ENCODE measurements at regions of chr4 and their contacts with region 1.

Region 1: GRCh38 chr4:71553605-71554004 is 214.8 kb downstream of the SLC4A4 start:
- DNase-seq: peak; percentile 64
- ATAC-seq: peak; percentile 70
- H3K4me3 ChIP-seq: no peak overlapping the region
- H3K27ac ChIP-seq: no peak overlapping the region
- H3K4me1 ChIP-seq: peaks cover 23% of the 10 kb centered on the region
- H3K27me3 ChIP-seq: no peaks in the 10 kb centered on the region
- CTCF ChIP-seq: peak; percentile 84

Region 2: DNA sequence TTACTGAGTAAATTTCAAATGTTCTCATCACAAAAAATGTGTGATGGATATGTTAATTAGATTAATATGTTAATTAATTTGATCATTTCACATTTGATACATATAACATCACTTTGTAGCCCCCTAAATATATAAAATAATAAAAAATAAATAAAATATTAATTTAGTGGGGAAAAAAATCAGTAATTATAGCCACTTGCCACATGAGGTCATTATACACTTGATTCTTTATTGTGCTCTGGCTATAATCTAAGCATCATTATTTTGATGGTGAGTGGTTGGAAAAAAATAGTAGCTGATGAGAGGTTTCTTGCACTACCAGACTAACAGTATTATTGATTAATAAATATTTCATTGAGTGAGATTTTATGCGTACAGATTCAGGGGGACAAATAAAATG is 502.8 kb before region 1 on chr4:
- CTCF ChIA-PET with region 1: no interaction called
- POLR2A ChIA-PET with region 1: no interaction called
- intact Hi-C with region 1: loop called (anchors 5 kb)
- DNase-seq: peak; percentile 43
- ATAC-seq: peak; percentile 64; the same call in 1 of the 2 replicates
- H3K4me3 ChIP-seq: no peak overlapping the region
- H3K27ac ChIP-seq: no peak overlapping the region
- H3K4me1 ChIP-seq: no peaks in the 10 kb centered on the region
- H3K27me3 ChIP-seq: no peaks in the 10 kb centered on the region
- CTCF ChIP-seq: peak; percentile 29; the same call in 1 of the 2 replicates

Region 3: DNA sequence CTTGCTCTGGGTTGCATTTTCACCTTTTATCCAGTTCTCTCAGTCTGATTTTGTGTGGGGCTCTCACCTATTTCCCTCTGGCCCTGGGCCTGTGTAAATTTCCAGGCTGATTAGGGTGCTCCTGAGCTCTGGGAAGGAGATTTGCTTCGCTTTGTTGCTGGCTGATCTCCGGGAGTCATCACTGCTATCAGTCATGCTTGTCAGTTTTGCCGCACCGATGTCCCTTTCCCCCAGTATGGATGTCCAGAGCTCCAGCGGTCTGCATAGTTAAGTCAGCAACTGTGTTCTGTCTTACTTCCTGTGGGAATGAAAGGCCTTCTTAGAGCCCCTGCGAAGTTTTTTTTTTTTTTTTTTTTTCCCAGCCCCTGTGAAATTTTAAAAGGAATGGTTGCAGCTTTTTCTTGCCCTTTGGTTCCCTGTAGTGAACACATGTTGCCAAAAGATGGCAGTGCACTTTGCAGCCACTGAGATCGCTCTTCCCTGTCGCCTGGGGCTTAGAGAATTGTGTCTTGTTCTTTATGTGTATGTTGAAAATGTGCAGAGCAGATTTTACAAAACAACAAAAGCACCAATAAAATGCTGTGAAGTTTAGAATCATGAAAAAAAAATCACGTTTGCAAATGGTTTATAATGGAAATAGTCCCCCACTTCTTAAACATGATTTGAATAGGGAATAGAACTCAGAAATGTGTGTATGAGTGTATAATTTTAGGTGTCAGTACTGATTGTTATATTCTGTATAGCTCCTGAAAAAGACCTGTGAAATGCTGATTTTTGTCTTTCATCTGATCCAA is 323.9 kb before region 1 on chr4:
- CTCF ChIA-PET with region 1: interaction called, 5 read pairs
- POLR2A ChIA-PET with region 1: no interaction called
- intact Hi-C with region 1: loop called (anchors 1 kb)
- DNase-seq: peak; percentile 70
- ATAC-seq: peak; percentile 88
- H3K4me3 ChIP-seq: peak overlapping the region; percentile 53
- H3K27ac ChIP-seq: no peak overlapping the region
- H3K4me1 ChIP-seq: peaks cover 6% of the 10 kb centered on the region; the same call in 1 of the 2 replicates
- H3K27me3 ChIP-seq: no peaks in the 10 kb centered on the region
- CTCF ChIP-seq: peak; percentile 90

Region 4: GRCh38 chr4:71287305-71287704 is 266.3 kb before region 1 on chr4:
- CTCF ChIA-PET with region 1: no interaction called
- POLR2A ChIA-PET with region 1: no interaction called
- intact Hi-C with region 1: loop called (anchors 5 kb)
- DNase-seq: peak; percentile 89
- ATAC-seq: peak; percentile 81
- H3K4me3 ChIP-seq: no peak overlapping the region
- H3K27ac ChIP-seq: peak overlapping the region; percentile 31
- H3K4me1 ChIP-seq: peaks cover 26% of the 10 kb centered on the region
- H3K27me3 ChIP-seq: no peaks in the 10 kb centered on the region
- CTCF ChIP-seq: no peak

Region 5: DNA sequence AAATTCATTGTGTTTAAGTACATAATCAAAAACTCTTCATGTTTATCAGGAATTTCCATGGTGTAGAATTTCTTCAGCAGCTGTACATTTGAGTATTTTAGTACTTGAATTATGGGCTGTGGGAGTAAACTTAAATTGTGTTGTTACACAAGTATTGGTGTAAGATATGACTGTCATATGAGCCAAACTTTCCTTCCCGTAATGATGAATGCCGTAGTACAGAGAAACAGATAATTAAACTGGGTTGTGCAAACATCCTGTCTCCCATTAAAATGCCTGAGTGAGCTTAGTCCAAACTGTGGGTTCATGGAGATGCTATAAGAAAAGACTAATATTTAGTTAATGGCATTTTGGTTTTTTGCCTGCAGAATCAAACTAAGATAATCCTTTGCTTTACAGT is 55.6 kb before region 1 on chr4:
- CTCF ChIA-PET with region 1: interaction called, 3 read pairs
- POLR2A ChIA-PET with region 1: no interaction called
- intact Hi-C with region 1: loop called (anchors 1 kb)
- DNase-seq: peak; percentile 78
- ATAC-seq: peak; percentile 95
- H3K4me3 ChIP-seq: no peak overlapping the region
- H3K27ac ChIP-seq: peak overlapping the region; percentile 11
- H3K4me1 ChIP-seq: peaks cover 17% of the 10 kb centered on the region
- H3K27me3 ChIP-seq: no peaks in the 10 kb centered on the region
- CTCF ChIP-seq: no peak